Ovary (tissue), 10 donors: ENCODE measurements at regions of chr6 and their contacts with region 1.

Region 1: GRCh38 chr6:3251462-3252314 is 7.1 kb upstream of the PSMG4 start:
- DNase-seq: peak; percentile 53 to 82 (median 77)
- H3K4me3 ChIP-seq: no peak overlapping the region
- H3K27ac ChIP-seq: no peak overlapping the region
- H3K4me1 ChIP-seq: peaks cover 3% of the 10 kb centered on the region
- H3K27me3 ChIP-seq: no peaks in the 10 kb centered on the region
- CTCF ChIP-seq: peak; percentile 70 to 80 (median 71)
- EP300 ChIP-seq: no peak
- POLR2A ChIP-seq: no peak

Region 2: DNA sequence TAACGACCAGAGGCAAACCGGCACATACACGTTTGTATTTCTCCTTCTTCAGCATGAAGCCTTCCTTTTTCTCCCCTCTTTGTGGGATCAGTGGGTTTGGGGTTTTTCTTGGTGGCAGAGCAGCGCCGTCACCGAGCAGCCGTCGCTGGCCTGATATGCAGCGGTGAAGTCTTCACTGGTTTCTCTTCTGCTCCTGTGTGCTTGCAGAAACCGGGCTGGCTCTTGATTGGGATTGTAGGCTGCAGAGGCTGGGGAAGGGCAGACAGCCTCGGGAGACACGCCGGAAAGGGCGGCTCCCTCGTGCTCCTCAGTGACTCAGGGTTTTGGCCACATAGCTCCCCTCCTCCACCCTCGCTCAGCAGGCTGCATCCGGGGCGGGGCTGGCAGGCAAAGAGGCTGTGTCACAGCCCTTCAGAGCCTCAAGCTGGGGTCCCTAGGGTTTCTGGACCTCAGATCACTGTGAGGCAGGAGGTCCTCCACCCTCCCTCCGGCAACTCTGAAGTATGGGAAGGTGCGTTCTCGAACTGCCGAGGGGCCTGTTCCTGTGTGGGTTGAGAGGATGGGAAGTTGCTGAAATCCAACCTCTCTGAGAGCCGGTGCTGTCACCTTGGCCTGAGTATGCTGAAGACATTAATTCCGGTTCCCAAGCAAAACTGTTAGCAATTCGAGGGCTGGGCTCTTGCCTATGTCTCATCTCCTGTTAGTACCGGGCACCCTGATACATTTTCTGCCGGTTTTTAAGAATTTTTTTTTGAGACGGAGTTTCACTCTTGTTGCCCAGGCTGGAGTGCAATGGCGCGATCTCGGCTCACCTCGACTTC is 227.8 kb before region 1 on chr6:
- intact Hi-C with region 1: no loop called
- DNase-seq: peak; percentile 86 to 91 (median 88)
- H3K4me3 ChIP-seq: peak overlapping the region; percentile 23
- H3K27ac ChIP-seq: peak overlapping the region in 1 of 2 donors; percentile 85
- H3K4me1 ChIP-seq: no peaks in the 10 kb centered on the region
- H3K27me3 ChIP-seq: no peaks in the 10 kb centered on the region
- CTCF ChIP-seq: no peak
- EP300 ChIP-seq: no peak
- POLR2A ChIP-seq: peak; percentile 41

Region 3: DNA sequence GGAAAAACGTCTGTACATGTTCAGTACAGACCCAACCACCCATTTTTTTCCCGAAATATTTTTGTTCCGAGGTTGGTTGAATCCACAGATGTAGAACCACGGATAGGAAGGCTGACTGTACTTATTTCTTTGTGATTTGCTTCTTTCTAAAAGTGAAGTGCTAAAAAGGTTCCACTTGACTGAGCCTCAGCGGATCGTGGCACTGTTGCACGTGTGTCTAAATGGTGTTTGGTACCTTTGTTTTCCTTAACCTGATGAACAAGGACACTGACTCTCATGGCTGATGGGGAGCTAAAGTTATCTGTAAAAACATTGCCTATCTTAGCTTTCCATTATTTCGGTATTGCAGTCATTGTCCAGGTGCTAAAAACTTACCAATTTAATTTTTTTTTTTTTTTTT is 127.0 kb before region 1 on chr6:
- intact Hi-C with region 1: loop called (anchors 5 kb)
- DNase-seq: no peak
- H3K4me3 ChIP-seq: no peak overlapping the region
- H3K27ac ChIP-seq: no peak overlapping the region
- H3K4me1 ChIP-seq: no peaks in the 10 kb centered on the region
- H3K27me3 ChIP-seq: no peaks in the 10 kb centered on the region
- CTCF ChIP-seq: no peak
- EP300 ChIP-seq: no peak
- POLR2A ChIP-seq: no peak

Region 4: GRCh38 chr6:3139090-3139903 is 112.4 kb before region 1 on chr6:
- intact Hi-C with region 1: no loop called
- DNase-seq: no peak
- H3K4me3 ChIP-seq: no peak overlapping the region
- H3K27ac ChIP-seq: no peak overlapping the region
- H3K4me1 ChIP-seq: no peaks in the 10 kb centered on the region
- H3K27me3 ChIP-seq: no peaks in the 10 kb centered on the region
- CTCF ChIP-seq: no peak
- EP300 ChIP-seq: no peak
- POLR2A ChIP-seq: no peak